Right cardiac atrium (tissue), 5 donors: ENCODE measurements at regions of chr3 and their contacts with region 1.

Region 1: DNA sequence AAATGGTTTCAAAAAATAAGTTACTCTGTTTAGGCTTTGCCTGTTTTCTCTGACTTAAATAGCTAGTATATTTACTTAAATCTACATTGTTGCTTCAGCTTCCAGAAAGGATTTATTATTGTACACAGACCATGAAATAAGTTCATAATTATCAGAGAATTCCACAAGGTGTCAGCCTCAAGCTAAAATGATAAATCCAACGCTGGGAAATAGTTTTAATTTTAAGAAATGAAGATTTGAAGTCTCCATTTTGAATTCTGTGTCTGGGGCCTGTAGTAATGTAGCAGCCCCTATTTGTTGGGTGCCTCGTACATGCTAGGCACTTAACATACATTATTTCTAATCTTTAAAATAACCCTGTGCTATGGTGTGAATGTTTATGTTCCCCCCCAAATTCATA is 92.6 kb upstream of the KCNMB2 start:
- DNase-seq: no peak
- ATAC-seq: no peak
- H3K4me3 ChIP-seq: no peak overlapping the region
- H3K27ac ChIP-seq: no peak overlapping the region
- H3K4me1 ChIP-seq: peaks cover 2% of the 10 kb centered on the region
- H3K27me3 ChIP-seq: no peaks in the 10 kb centered on the region

Region 2: DNA sequence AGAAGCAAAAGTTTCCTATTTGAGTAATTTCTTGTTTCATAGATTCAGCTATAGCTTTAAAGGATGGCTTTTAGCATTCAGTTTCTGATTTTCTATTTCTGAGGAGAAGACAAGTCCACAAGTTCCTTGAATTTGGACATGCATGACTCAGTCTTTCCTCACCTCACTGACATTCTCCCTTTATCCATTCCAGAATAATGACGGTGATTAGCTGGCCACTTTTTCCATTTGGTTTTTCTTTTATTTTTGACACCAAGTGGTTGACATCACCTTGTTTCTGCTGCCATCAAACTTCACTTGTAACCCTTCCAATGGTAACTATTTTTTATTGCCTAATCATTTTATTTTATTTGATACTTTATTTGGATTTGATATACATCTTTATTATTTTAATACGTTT is 311.8 kb before region 1 on chr3:
- intact Hi-C with region 1: no loop called
- DNase-seq: no peak
- ATAC-seq: no peak
- H3K4me3 ChIP-seq: no peak overlapping the region
- H3K27ac ChIP-seq: no peak overlapping the region
- H3K4me1 ChIP-seq: no peaks in the 10 kb centered on the region
- H3K27me3 ChIP-seq: no peaks in the 10 kb centered on the region

Region 3: GRCh38 chr3:178536211-178537079 is 92.8 kb after region 1 on chr3 and contains the start of gene KCNMB2:
- intact Hi-C with region 1: loop called in 1 of 4 experiments (anchors 10 kb)
- DNase-seq: no peak
- ATAC-seq: peak; percentile 82 to 84
- H3K4me3 ChIP-seq: peak within 1 kb of the TSS; percentile 79
- H3K27ac ChIP-seq: peak within 1 kb of the TSS; percentile 59
- H3K4me1 ChIP-seq: no peaks in the 10 kb centered on the region
- H3K27me3 ChIP-seq: no peaks in the 10 kb centered on the region
- total RNA-seq, gene KCNMB2: 4.5 to 10.0 (median 5.9) TPM

Region 4: DNA sequence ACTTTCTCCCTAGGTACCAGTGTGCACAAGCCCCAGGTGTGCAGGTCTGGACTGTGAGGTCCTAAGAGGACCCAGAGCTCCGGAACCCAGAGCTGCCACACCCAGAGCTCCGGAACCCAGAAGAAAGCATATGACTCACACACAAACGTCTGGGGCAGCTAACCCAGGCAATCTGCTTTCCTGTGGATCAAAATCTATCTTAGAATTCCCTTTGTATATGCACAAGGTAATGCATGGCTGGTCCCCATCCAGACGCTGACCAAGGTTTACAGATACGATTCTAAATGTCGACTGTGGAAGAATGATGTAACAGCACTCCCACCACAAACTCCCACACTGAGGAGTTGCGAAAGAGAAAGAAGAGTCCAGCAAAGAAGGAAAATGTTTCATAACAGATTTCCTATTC is 108.3 kb after region 1 on chr3:
- intact Hi-C with region 1: no loop called
- DNase-seq: peak in 2 of 3 donors; percentile 10 to 49
- ATAC-seq: peak; percentile 70 to 72
- H3K4me3 ChIP-seq: no peak overlapping the region
- H3K27ac ChIP-seq: no peak overlapping the region
- H3K4me1 ChIP-seq: no peaks in the 10 kb centered on the region
- H3K27me3 ChIP-seq: no peaks in the 10 kb centered on the region

Region 5: DNA sequence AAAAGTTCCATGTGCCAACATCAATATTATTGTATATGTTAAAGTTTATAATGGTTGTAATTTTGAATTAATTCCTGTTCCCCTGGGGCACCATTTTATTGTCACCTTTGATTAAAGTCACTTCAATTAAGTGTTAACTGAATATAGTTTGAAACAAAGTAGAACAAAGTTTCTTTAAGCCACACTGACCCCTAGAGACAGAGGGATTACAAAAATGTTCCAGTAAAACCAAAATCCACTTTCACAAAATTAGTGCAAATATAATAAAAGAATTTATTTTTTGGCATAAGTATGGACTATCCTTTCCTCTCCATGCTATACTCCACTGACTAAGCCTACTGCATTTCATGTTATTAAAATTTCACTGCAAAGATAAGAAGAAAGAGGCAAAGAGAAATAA is 504.1 kb after region 1 on chr3:
- intact Hi-C with region 1: loop called in 3 of 4 experiments (anchors 5 kb)
- DNase-seq: no peak
- ATAC-seq: no peak
- H3K4me3 ChIP-seq: no peak overlapping the region
- H3K27ac ChIP-seq: no peak overlapping the region
- H3K4me1 ChIP-seq: no peaks in the 10 kb centered on the region
- H3K27me3 ChIP-seq: no peaks in the 10 kb centered on the region